HAP-1 (cell line): ENCODE measurements at regions of chr11 and their contacts with region 1.

Region 1: DNA sequence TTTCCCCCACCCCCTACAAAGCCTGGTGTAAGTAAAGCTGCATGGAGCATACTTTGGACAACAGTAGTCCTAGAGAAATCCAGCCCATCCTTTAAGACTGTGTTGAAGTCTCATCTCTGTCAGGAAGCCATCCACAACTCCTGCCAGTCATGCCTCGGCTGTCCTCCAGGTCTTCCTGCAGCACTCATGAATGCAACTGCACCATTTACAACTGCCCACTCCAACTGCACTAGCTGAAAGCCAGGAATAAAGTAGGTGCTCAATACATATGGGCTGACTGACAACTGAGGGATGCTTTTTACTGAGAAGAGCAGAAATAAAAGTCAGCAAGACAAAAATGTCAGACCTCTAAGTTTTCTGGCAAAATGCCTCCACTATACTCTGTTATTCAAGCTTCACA is 27.4 kb downstream of the IL18BP start:
- DNase-seq: no peak
- H3K4me3 ChIP-seq: no peak overlapping the region
- H3K4me1 ChIP-seq: no peaks in the 10 kb centered on the region
- H3K27me3 ChIP-seq: no peaks in the 10 kb centered on the region

Region 2: DNA sequence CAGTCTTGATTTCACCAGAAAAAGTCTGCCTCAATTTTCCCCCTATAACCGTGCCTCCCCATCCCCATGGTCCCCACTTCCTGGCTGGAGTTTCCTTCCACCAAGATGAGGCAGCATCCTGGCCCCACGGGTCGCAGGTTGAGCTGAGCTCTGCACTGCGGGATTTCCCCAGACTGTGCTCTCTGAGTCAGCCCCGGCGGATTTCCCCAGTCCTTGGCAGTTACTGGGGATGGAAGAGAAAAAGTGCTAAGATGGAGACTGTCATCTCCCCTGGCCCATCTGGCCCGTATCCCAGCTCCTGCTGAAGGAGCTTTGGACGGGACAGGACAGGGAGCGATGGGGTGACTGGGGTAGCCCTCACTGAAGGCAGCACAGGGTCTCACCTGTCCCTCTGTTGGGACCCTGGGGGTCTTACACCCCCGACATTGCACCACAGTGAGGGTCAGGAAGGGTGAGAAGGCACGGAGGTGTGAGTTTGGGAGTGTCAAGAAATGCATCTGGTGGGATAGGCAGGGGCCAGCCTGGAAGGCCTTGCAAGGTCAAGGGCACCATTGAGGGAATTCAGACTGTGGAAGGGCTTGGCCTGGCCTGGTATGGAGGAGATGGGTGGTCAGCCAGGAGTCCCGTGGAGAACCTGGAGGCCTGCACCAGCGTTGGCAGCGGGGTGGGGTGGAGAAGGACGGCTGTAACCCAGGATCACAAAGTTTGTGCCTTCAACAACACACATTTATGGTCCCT is 536.6 kb before region 1 on chr11:
- in situ Hi-C with region 1: no loop called
- DNase-seq: no peak
- H3K4me3 ChIP-seq: no peak overlapping the region
- H3K4me1 ChIP-seq: no peaks in the 10 kb centered on the region
- H3K27me3 ChIP-seq: no peaks in the 10 kb centered on the region

Region 3: GRCh38 chr11:71563401-71563800 is 462.7 kb before region 1 on chr11:
- in situ Hi-C with region 1: no loop called
- DNase-seq: peak; percentile 16 to 42
- H3K4me3 ChIP-seq: no peak overlapping the region
- H3K4me1 ChIP-seq: no peaks in the 10 kb centered on the region
- H3K27me3 ChIP-seq: peaks cover 24% of the 10 kb centered on the region

Region 4: DNA sequence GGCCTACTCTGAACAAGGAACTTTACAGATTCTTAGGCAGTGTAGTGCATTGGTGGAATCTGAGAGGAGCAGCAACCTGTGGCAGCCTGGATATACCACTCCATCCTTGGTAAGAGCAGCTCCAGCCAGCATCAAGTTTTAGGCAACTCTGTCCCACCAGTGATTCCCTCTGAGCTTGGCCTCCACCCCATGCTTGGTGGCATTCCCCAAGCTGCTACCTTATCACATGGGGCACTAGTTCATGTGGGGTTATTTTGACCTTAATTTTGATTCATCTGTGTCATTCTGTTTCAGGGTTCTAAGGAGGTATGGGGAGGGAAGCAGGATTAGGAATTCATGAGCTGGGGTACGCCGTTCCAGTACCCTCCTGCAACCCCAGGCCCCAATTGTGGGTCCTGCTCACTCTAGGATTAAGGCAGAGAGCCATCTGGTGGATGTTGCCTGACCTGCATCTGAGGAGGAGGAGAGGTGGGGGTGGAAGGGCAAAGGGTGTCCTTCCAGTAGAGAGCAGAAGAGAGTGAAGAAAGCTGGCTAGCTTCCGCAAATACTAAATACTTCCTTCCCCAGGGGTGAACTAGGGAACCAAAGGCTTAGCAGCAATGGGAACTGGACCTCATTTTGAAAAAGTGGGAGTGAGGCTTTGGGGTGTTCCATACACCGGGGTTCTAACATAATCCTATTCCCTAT is 65.1 kb after region 1 on chr11:
- in situ Hi-C with region 1: loop called (anchors 5 kb)
- DNase-seq: peak; percentile 68 to 84
- H3K4me3 ChIP-seq: no peak overlapping the region
- H3K4me1 ChIP-seq: no peaks in the 10 kb centered on the region
- H3K27me3 ChIP-seq: no peaks in the 10 kb centered on the region

Region 5: GRCh38 chr11:72189461-72190275 is 163.6 kb after region 1 on chr11:
- in situ Hi-C with region 1: loop called (anchors 10 kb)
- DNase-seq: no peak
- H3K4me3 ChIP-seq: no peak overlapping the region
- H3K4me1 ChIP-seq: peaks cover 8% of the 10 kb centered on the region
- H3K27me3 ChIP-seq: no peaks in the 10 kb centered on the region

Region 6: DNA sequence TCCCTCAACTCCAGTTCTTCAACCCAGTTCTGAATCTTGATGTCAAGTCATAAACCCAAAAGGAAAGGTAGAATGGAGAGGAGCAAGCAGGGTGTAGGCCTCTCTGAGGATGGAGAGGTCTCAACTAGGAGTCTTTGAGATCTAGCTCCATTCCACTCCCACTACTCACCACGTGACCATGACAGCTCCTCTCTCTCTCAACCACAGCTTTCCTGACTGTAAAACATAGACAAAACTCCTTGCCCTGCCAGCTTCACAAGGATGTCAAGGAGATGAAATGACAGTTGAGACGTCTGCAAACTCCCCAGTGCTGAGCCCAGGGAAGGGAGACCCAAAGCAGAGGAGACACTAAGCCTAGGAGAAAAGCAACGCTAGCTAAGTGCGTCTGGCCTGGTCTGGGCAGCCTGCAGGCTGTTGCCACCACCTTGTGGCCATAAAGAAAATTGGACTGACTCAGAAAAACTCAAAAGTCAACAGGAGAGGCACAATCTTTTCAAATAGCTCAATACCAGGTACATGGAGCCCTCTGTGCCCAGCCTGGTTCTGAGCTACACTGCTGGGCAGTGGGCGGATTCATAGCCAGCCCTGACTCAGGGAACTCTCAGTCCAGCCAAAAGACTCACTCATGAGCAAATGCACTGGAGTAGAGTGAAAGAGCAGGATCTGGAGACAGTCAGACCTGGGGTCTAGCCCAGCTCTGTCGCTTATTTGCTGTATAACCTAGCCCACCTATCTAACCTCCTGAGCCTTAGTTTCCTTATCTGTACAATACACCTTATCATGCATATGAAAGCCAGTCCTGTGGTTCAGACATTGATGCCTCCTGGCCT is 404.9 kb after region 1 on chr11:
- in situ Hi-C with region 1: loop called (anchors 5 kb)
- DNase-seq: peak; percentile 50 to 64
- H3K4me3 ChIP-seq: no peak overlapping the region
- H3K4me1 ChIP-seq: no peaks in the 10 kb centered on the region
- H3K27me3 ChIP-seq: no peaks in the 10 kb centered on the region

Region 7: GRCh38 chr11:72446902-72447769 is 421.0 kb after region 1 on chr11:
- in situ Hi-C with region 1: no loop called
- DNase-seq: peak; percentile 16 to 77
- H3K4me3 ChIP-seq: no peak overlapping the region
- H3K4me1 ChIP-seq: no peaks in the 10 kb centered on the region
- H3K27me3 ChIP-seq: 0 out of 2 replicates have a peak, but pooled peaks cover 3% of the 10 kb centered on the region

Region 8: GRCh38 chr11:73307323-73308002 is 1281.4 kb after region 1 on chr11:
- in situ Hi-C with region 1: no loop called
- DNase-seq: peak; percentile 96 to 100
- H3K4me3 ChIP-seq: peak overlapping the region; percentile 58
- H3K4me1 ChIP-seq: peaks cover 20% of the 10 kb centered on the region
- H3K27me3 ChIP-seq: no peaks in the 10 kb centered on the region